ENCODE measurements at regions of chr18 and their contacts with region 1.

Region 1: GRCh38 chr18:3665780-3666525 is 216.0 kb downstream of the TGIF1 start:
- DNase-seq: peak; percentile 33
- H3K4me3 ChIP-seq: no peak overlapping the region
- H3K27me3 ChIP-seq: no peaks in the 10 kb centered on the region
- CTCF ChIP-seq: peak; percentile 88

Region 2: GRCh38 chr18:3245185-3245564 is 420.8 kb before region 1 on chr18:
- CTCF ChIA-PET with region 1: no interaction called
- POLR2A ChIA-PET with region 1: no interaction called
- DNase-seq: no peak
- H3K4me3 ChIP-seq: peak overlapping the region; percentile 95
- H3K27me3 ChIP-seq: no peaks in the 10 kb centered on the region
- CTCF ChIP-seq: no peak

Region 3: DNA sequence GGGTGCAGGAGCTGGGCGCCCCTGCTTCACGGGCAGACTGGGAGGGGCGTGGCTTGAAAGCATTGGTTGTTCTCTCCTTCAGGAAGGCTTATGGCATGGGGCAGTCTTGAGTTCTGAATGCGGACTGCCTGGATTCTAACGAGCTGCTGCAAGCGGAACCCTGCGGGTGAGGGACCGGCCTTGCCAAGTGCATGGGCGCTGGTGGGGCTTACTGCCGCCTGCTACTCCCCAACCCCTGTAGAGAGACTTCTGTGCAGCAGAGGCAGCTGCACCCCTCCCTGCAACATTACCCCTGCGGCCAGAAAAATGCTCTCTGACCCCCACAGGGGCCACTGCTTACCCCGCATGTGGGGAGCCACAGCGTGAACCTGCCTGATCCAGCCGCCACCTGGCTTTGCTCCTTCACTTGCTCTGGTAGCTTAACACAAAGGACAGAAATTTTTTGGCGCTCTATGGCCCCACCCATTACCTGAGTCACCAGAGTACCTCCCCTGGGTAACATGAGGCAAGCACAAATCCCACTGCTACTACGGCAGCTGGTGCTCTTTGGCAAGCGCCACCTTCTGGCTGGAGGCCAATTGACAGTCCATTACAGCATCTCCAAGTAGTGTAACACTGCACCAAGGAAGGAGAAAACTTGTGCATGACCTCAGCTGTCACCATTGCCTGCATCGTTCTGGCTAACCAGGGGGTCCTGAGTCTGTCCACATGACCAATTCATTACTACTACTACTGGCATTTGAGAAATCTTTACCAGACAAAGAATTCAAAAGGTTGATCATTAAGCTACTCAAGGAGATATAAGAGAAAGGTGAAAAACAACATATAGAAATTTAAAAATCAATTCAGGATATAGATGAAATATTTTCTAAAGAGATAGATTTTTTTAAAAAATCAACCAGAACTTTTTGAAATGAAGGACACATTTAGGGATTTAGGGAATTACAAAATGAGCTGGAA is 368.6 kb before region 1 on chr18:
- CTCF ChIA-PET with region 1: interaction called, 10 read pairs
- POLR2A ChIA-PET with region 1: no interaction called
- DNase-seq: peak; percentile 37
- H3K4me3 ChIP-seq: peak overlapping the region; percentile 35
- H3K27me3 ChIP-seq: no peaks in the 10 kb centered on the region
- CTCF ChIP-seq: no peak; the same call in 1 of the 2 replicates

Region 4: DNA sequence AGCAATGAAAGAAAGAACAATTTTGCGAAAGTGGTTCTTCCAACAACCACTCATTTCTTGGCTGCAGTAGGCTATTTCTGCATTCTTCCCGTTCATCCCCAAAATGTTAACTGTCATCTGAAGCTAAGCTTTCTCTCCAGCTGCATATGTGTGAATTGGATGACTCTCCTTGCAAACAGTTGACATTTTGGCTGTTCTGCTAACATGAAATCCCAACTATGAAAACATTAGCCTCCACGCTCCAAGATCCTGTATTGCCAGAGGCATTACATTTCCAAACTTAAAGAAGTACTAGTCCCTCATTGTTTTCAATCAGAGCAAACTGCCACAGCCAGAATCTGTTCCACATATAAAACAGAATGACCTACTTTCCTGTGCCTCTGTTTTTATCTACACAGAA is 127.5 kb before region 1 on chr18:
- CTCF ChIA-PET with region 1: no interaction called
- POLR2A ChIA-PET with region 1: no interaction called
- DNase-seq: no peak
- H3K4me3 ChIP-seq: no peak overlapping the region
- H3K27me3 ChIP-seq: peaks cover 7% of the 10 kb centered on the region
- CTCF ChIP-seq: no peak

Region 5: GRCh38 chr18:3585656-3586509 is 80.1 kb before region 1 on chr18:
- CTCF ChIA-PET with region 1: interaction called, 24 read pairs
- POLR2A ChIA-PET with region 1: no interaction called
- DNase-seq: no peak
- H3K4me3 ChIP-seq: no peak overlapping the region
- H3K27me3 ChIP-seq: no peaks in the 10 kb centered on the region
- CTCF ChIP-seq: peak; percentile 85

Region 6: DNA sequence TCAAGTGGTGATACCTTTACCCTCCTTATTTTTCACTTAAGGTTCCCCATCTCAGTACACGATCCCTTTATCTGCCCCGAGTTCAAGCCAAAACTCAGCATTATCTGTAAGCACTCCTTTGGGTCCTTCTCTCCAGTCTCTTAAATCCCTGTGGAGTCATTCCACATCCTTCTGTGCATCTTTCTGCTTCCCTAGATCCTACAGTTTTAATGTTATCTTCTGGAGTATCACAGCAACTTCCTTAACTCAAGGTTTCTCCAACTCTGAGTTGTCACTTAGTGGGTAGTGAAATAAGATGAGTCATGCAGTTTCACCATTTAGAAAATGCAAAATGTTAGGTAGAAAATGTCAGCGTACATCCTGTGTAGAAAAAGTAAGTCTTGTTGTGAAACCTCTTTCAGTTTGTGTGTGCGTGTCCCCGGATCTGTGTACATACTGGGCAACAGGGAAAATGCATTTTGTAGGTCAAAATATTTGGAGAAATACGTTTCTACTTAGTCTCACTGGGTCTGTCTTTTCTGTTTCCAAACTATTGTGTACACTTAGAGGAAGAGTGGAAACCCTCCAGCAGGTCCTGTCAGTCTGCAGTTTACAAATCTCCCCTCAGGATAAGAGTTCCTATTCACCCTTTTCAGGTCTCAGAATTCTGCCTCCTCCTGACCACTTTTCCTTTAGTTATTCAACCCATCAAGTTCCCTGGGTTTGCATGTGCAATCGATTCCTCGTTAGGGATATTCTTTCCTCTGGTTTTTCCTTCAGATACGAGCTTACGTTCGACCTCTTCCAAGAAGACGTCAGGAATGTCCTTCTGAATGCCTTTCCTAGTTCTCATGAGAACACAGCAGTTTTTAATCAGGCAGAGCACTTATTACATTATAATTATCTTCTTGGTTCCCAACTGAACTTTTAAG is 61.2 kb before region 1 on chr18:
- CTCF ChIA-PET with region 1: interaction called, 47 read pairs
- POLR2A ChIA-PET with region 1: no interaction called
- DNase-seq: peak; percentile 97
- H3K4me3 ChIP-seq: peak overlapping the region; percentile 45
- H3K27me3 ChIP-seq: no peaks in the 10 kb centered on the region
- CTCF ChIP-seq: no peak

Region 7: DNA sequence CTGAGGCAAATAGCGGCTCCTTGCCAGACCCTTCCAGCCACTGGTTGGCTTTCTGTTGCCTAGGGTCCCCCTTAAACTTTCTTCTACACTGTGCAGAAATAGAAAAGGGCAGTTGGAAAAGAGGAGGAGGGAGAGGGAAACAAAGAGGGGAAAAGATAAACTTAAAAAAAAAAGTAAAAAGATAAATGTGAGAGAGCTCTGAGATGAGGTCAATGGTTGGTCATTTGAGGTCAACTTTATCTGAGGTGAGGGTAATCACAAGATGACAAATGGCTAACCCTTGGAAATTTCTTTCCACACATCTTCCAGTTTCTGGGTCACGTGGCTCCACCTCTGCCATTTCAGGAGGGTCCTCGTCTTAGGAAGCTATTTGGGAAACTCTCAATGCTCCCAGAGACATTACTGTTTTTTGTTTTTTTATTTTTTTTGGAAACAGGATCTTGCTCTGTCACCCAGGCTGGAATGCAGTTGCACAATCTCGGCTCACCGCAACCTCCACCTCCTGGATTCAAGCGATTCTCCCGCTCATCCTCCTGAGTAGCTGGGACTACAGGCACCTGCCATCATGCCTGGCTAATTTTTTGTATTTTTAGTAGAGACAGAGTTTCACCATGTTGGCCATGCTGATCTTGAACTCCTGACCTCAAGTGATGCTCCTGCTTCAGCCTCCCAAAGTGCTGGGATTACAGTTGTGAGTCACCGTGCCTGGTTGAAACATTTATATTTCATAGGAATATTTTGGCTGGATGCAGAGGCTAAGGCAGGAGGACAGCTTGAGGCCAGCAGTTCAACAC is 16.1 kb before region 1 on chr18:
- CTCF ChIA-PET with region 1: interaction called, 13 read pairs
- POLR2A ChIA-PET with region 1: no interaction called
- DNase-seq: no peak
- H3K4me3 ChIP-seq: no peak overlapping the region
- H3K27me3 ChIP-seq: no peaks in the 10 kb centered on the region
- CTCF ChIP-seq: no peak